ENCODE measurements at regions of chr3 and their contacts with region 1.

Region 1: DNA sequence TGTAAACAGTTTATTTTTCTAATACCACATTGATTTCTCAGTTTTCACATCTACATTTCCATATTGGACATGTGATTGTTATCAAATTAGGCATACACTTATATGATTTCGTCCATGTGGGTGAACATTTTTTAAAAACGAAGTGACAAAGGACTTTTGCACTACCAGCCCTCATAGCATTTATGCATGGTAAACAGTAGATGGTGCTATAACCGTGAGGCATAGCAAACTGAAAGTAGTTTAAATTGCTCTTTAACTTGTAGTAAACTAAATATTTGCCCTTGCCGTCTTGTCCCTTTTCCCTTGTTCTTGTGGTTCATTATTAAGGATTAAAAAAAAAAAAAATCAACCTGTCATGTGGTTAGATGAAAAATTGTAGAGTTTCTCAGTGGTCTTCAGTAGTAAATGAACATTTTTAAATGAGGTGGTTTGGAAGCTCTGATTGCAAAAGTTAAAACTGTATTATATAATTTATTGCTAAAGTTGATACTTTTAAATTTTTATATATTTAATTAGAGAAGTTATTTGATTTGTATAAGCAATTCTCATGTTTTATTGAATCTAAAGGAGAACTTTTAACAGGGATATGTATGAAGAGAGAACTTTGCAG is 24.0 kb downstream of the STX19 start:
- DNase-seq: no peak
- H3K4me3 Mint-ChIP-seq: no peak overlapping the region
- H3K27ac Mint-ChIP-seq: no peak overlapping the region
- H3K4me1 Mint-ChIP-seq: no peaks in the 10 kb centered on the region
- H3K27me3 Mint-ChIP-seq: no peaks in the 10 kb centered on the region
- CTCF ChIP-seq: no peak

Region 2: DNA sequence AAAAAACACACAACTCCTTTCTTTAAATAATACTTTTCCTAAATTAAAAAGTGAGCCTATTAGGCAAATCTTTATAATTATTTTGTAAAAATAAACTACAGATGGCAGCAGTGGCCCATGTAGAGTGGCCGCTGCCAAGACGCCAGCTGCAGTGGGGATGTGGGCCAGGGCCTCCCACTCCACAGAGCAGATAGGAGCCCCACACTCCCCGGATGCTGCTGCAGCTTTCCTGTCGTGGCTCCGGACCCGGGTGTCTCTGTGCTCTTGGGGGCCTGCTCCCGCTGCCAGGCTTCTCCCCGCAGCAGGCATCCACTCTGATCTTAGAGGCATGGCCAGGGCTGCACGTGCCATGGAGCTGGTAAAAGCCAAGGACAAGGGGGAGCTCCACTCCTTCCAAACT is 98.2 kb before region 1 on chr3:
- CTCF ChIA-PET with region 1: no interaction called
- intact Hi-C with region 1: no loop called
- DNase-seq: no peak
- H3K4me3 Mint-ChIP-seq: no peak overlapping the region
- H3K27ac Mint-ChIP-seq: no peak overlapping the region
- H3K4me1 Mint-ChIP-seq: no peaks in the 10 kb centered on the region
- H3K27me3 Mint-ChIP-seq: no peaks in the 10 kb centered on the region
- CTCF ChIP-seq: no peak

Region 3: GRCh38 chr3:94036909-94037507 is 32.6 kb after region 1 on chr3:
- CTCF ChIA-PET with region 1: no interaction called
- intact Hi-C with region 1: no loop called
- DNase-seq: no peak
- H3K4me3 Mint-ChIP-seq: no peak overlapping the region
- H3K27ac Mint-ChIP-seq: no peak overlapping the region
- H3K4me1 Mint-ChIP-seq: no peaks in the 10 kb centered on the region
- H3K27me3 Mint-ChIP-seq: no peaks in the 10 kb centered on the region
- CTCF ChIP-seq: peak; percentile 57

Region 4: GRCh38 chr3:94069194-94069813 is 64.9 kb after region 1 on chr3:
- CTCF ChIA-PET with region 1: interaction called, 3 read pairs
- intact Hi-C with region 1: loop called (anchors 1 kb)
- DNase-seq: no peak
- H3K4me3 Mint-ChIP-seq: no peak overlapping the region
- H3K27ac Mint-ChIP-seq: no peak overlapping the region
- H3K4me1 Mint-ChIP-seq: peaks cover 17% of the 10 kb centered on the region
- H3K27me3 Mint-ChIP-seq: no peaks in the 10 kb centered on the region
- CTCF ChIP-seq: no peak

Region 5: GRCh38 chr3:94101851-94102250 is 97.4 kb after region 1 on chr3:
- CTCF ChIA-PET with region 1: interaction called, 9 read pairs
- intact Hi-C with region 1: loop called (anchors 10 kb)
- DNase-seq: no peak
- H3K4me3 Mint-ChIP-seq: no peak overlapping the region
- H3K27ac Mint-ChIP-seq: no peak overlapping the region
- H3K4me1 Mint-ChIP-seq: no peaks in the 10 kb centered on the region
- H3K27me3 Mint-ChIP-seq: no peaks in the 10 kb centered on the region
- CTCF ChIP-seq: no peak

Measured in Calu3 (cell line).